ENCODE measurements at regions of chr9 and their contacts with region 1.

Region 1: GRCh38 chr9:73761905-73762304 is 610.2 kb downstream of the ANXA1 start:
- DNase-seq: no peak
- ATAC-seq: no peak
- H3K4me3 Mint-ChIP-seq: no peak overlapping the region
- H3K27ac Mint-ChIP-seq: no peak overlapping the region
- H3K4me1 Mint-ChIP-seq: no peaks in the 10 kb centered on the region
- H3K27me3 Mint-ChIP-seq: no peaks in the 10 kb centered on the region
- CTCF ChIP-seq: no peak

Region 2: DNA sequence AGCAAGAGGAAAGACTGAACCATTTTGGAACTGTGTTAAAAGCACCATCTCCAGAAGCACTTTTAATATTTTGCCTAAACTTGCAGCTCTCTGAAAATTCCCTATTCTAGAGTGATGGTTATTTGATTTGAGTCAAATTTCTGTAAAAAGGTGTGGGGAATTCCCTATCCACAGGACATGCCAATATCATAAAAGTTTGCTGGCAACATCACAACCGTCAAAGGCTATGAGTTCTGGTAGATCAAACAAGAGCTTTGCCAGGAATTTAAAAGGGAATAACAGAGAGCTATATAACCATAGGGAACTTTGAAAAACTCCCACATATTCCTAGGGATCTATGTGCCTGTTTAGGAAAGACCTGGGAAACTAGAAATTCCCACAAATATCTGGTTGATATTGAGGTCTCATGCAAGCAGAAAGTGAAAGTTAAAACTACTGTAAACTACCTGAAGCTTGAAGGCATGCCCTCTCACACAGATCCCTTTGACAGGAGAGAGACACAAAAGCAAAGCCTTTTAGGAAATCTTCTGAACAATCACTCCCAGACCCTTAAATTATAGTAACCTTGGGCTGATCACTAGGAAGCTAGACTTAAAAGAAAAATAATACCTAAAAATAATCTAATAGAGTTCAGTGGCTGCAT is 60.4 kb before region 1 on chr9:
- CTCF ChIA-PET with region 1: no interaction called
- POLR2A ChIA-PET with region 1: no interaction called
- intact Hi-C with region 1: loop called (anchors 10 kb)
- DNase-seq: no peak
- ATAC-seq: no peak
- H3K4me3 Mint-ChIP-seq: no peak overlapping the region
- H3K27ac Mint-ChIP-seq: no peak overlapping the region
- H3K4me1 Mint-ChIP-seq: no peaks in the 10 kb centered on the region
- H3K27me3 Mint-ChIP-seq: no peaks in the 10 kb centered on the region
- CTCF ChIP-seq: no peak

Region 3: GRCh38 chr9:73896061-73896460 is 134.2 kb after region 1 on chr9:
- CTCF ChIA-PET with region 1: no interaction called
- POLR2A ChIA-PET with region 1: no interaction called
- intact Hi-C with region 1: no loop called
- DNase-seq: no peak
- ATAC-seq: no peak
- H3K4me3 Mint-ChIP-seq: no peak overlapping the region
- H3K27ac Mint-ChIP-seq: no peak overlapping the region
- H3K4me1 Mint-ChIP-seq: no peaks in the 10 kb centered on the region
- H3K27me3 Mint-ChIP-seq: no peaks in the 10 kb centered on the region
- CTCF ChIP-seq: no peak

Measured in activated B cell treated with CpG ODN at 0.5 μM for 24 hours (primary cell).